Common myeloid progenitor, CD34-positive (primary cell): ENCODE measurements at regions of chr20 and their contacts with region 1.

Region 1: GRCh38 chr20:46349035-46349741 is 40.9 kb upstream of the CDH22 start:
- DNase-seq: peak; percentile 48 to 64 (median 58)
- H3K4me3 ChIP-seq: no peak overlapping the region
- H3K27ac ChIP-seq: no peak overlapping the region
- H3K4me1 ChIP-seq: peaks cover 0 to 19% (median 12%) of the 10 kb centered on the region in 4 experiments
- H3K27me3 ChIP-seq: peaks cover 0 to 3% (median 0%) of the 10 kb centered on the region in 5 experiments

Region 2: DNA sequence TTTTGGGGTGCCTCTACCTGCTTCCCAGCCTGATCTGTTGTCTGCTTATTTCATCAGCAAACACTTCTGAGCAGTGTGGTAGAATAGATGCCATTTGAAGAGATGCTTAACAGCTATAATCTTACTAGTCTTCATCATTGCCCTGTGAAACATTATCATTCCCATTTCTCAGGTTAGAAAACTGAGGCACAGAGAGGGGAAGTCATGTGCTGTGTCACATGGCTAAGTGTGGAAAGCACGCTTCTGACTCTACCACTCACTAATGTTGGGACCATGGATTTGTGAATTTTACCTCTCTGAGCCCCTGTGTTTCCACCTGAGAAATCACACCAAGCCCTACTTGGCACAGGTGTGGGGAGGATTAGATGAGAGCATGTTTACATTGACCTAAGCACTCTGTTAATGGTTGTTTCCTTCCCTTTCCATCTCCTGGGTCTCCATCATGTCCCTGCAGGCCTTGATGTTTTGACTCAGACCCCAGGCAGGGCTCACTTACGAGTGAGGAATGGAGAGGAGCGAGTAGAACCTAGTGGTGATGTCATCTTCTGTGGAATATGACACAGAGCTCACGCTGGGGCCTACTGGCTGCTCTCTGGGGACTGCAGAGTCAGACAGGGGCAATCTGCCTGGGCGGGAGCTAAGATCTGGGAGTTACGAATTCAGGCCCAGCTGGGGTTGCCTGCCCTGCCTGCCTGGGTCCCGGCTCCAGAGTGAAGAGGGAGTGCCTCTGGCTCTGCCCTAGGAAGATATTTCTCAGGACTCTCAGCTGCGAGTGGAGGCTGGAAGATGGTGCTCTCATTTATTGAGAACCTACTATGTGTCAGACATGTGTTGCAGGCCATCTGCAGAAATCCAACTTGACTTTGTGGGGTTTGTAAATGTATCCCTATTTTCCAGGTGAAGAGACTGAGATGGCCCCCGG is 105.2 kb before region 1 on chr20:
- CTCF ChIA-PET with region 1: no interaction called
- POLR2A ChIA-PET with region 1: no interaction called
- DNase-seq: no peak
- H3K4me3 ChIP-seq: no peak overlapping the region
- H3K27ac ChIP-seq: no peak overlapping the region
- H3K4me1 ChIP-seq: peaks cover 0 to 15% (median 4%) of the 10 kb centered on the region in 4 experiments
- H3K27me3 ChIP-seq: peaks cover under 1 to 45% (median 20%) of the 10 kb centered on the region in 5 experiments

Region 3: DNA sequence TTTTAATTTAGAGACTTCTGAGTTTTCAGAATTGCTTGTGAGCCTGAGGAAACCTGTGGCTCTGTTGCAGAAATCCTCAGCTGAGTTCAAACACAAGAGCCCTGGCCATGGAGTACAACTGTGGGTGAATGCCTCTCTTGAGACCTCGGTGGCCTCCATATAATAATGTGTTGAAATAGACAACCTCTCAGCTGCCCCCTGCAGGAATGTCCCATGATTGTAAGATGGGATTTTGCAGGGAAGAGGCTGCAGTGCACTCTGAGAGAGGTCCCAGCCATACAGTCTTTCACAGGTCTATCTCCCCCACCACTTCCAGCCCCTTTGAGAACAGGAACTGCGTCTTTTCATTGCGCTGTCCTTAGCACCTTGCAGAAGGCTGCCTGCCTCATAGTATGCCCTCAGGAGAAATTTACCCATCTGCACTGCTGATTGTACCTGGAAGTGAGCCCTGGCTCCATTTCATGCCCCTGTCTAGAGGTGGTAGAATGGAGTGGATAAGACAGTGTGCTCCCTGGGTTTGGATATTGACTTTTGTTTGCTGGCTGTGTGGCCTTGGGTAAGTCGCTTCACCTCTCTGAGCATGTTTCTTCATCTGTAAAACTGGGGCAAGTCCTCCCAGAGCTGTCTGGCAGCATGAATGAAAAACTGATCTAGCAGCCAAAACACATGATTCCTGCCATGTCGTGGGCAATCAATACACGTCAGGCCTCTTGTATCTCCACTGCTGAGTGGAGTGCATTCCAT is 24.1 kb before region 1 on chr20:
- CTCF ChIA-PET with region 1: interaction called, 15 read pairs
- POLR2A ChIA-PET with region 1: no interaction called
- DNase-seq: peak; percentile 43 to 62 (median 58)
- H3K4me3 ChIP-seq: no peak overlapping the region
- H3K27ac ChIP-seq: no peak overlapping the region
- H3K4me1 ChIP-seq: peaks cover 0 to 1% (median 0%) of the 10 kb centered on the region in 4 experiments
- H3K27me3 ChIP-seq: peaks cover 0 to 17% (median 4%) of the 10 kb centered on the region in 5 experiments

Region 4: DNA sequence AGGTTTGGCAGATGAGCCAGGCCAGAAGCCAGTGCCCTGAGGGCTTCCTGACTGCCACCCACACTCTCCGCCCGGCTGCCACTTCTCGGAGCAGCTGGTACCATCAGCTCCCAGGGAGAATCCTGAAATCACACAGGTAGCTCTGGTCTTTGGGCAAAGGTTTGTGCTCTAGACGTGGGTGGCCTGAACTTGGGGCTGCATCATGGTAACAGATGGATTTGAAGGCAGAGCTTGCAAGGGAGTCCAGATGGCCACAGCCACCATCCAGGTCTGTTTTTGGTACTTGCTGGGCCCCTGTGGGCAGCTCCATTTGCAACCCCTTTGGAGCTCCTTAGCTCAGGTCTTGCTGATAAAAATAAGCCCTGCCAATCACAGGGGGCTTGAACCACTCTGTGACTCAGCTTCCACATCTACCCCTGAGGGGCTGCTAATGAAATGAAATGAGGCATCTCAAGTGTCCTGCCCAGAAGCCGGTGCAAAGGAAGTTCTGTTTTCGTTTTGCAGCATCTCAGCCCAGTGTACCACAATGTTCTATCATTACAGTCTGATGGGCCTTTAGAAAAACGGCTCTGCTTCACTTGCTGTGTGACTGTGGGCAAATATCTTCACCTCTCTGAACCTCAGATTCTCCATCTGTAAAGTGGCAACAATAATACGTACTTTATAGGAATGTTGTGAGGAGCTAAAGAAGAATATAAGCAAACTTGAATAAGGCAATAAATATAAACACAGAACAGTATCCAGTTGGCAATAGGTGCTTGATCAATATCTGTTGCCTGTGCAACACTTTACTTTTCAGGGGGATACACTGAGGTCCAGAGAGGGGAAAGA is 15.8 kb before region 1 on chr20:
- CTCF ChIA-PET with region 1: interaction called, 11 read pairs
- POLR2A ChIA-PET with region 1: no interaction called
- DNase-seq: no peak
- H3K4me3 ChIP-seq: no peak overlapping the region
- H3K27ac ChIP-seq: no peak overlapping the region
- H3K4me1 ChIP-seq: peaks cover 0 to 9% (median 4%) of the 10 kb centered on the region in 4 experiments
- H3K27me3 ChIP-seq: peaks cover 0 to 22% (median 0%) of the 10 kb centered on the region in 5 experiments

Region 5: DNA sequence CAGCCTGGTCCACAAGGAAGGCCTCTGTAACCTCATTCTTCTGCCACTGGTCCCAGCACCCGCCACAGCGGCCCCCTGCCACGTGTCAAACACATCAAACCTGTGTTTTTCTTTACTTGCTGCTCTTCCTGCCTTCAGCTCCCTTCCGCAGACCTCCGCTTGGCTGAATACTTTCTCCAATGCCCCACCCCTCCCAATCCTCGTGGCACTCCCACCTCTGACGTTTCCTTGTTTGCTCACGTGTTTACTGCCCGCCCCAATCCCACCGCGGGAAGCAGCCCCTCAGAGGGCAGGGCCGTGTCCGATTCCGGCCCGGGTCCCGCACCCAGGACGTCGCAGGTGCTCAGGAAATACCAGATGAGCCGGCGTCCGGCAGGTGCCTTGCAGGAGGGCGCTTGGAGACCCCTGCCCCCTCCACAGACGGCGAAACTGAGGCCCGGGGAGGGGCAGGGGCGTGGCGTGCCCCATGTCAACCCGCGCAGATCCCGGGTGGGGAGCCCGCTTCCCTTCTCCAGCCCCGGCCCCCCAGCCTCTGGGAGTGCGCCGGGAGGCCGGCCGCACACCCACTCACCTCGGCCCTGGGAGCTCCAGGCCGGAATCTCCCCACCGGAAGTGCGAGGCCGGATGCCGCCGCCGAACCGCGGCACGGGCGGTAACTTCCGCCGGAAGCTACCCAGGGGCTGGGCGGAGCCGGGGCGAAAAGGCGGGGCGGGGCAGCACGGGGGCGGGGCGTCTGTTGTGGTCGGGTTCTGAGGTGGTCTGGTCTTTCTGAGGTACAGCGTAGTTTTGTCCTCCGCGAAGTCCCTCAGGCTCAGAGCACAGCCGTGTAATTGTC is 14.8 kb after region 1 on chr20:
- CTCF ChIA-PET with region 1: interaction called, 21 read pairs
- POLR2A ChIA-PET with region 1: no interaction called
- DNase-seq: peak; percentile 88 to 92 (median 91)
- H3K4me3 ChIP-seq: peak overlapping the region; percentile 65 to 93 (median 87)
- H3K27ac ChIP-seq: peak overlapping the region; percentile 98
- H3K4me1 ChIP-seq: peaks cover 27 to 70% (median 52%) of the 10 kb centered on the region in 4 experiments
- H3K27me3 ChIP-seq: no peaks in the 10 kb centered on the region

Region 6: GRCh38 chr20:46494077-46494476 is 144.9 kb after region 1 on chr20:
- CTCF ChIA-PET with region 1: no interaction called
- POLR2A ChIA-PET with region 1: no interaction called
- DNase-seq: no peak
- H3K4me3 ChIP-seq: no peak overlapping the region
- H3K27ac ChIP-seq: no peak overlapping the region
- H3K4me1 ChIP-seq: no peaks in the 10 kb centered on the region
- H3K27me3 ChIP-seq: no peaks in the 10 kb centered on the region

Region 7: GRCh38 chr20:46681032-46681854 is 332.1 kb after region 1 on chr20:
- CTCF ChIA-PET with region 1: no interaction called
- POLR2A ChIA-PET with region 1: no interaction called
- DNase-seq: peak; percentile 63 to 86 (median 77)
- H3K4me3 ChIP-seq: no peak overlapping the region
- H3K27ac ChIP-seq: no peak overlapping the region
- H3K4me1 ChIP-seq: peaks cover 0 to 26% (median 17%) of the 10 kb centered on the region in 4 experiments
- H3K27me3 ChIP-seq: no peaks in the 10 kb centered on the region